ENCODE measurements at regions of chrX and their contacts with region 1.

Region 1: DNA sequence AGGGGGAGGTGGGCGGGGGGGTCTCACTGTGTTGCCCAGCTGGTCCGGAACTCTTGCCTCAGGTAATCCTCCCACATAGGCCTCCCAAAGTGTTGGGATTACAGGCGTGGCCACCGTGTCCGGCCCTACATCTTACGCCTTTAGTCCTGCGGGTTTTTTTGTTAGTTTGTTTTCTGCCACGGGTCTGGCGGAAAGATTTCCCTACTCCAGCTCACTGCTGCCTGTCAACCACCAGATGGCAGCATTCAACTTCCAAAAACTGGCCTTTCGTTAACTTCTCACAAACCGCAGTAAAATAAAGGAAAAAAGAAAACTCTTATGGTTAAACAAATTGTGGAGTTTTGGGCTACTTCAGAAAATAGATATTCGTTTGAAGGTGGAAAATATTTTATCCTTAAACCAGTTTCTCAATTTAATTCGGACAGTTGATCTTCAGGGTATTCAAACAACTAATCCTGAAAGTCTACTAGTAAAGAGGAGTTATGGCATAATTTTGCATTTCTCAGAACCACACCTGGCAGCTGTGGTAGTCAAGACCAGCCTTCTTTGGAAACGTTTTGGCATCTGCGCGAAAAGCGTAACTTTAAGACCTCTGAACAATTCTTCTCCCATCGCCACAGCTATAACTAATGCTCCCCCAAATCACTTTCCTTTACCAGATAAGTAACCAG is 41.1 kb downstream of the LUZP4 start:
- DNase-seq: peak; percentile 45
- H3K4me3 ChIP-seq: no peak overlapping the region
- H3K27ac ChIP-seq: no peak overlapping the region
- H3K4me1 ChIP-seq: no peaks in the 10 kb centered on the region
- H3K27me3 ChIP-seq: no peaks in the 10 kb centered on the region
- CTCF ChIP-seq: peak; percentile 73 to 84

Region 2: GRCh38 chrX:115642895-115643530 is 312.4 kb after region 1 on chrX:
- CTCF ChIA-PET with region 1: no interaction called
- dilution Hi-C with region 1: no loop called
- in situ Hi-C with region 1: no loop called
- intact Hi-C with region 1: loop called (anchors 2 kb)
- DNase-seq: peak; percentile 32
- H3K4me3 ChIP-seq: no peak overlapping the region
- H3K27ac ChIP-seq: peak overlapping the region; percentile 11
- H3K4me1 ChIP-seq: no peaks in the 10 kb centered on the region
- H3K27me3 ChIP-seq: no peaks in the 10 kb centered on the region
- CTCF ChIP-seq: peak; percentile 82 to 97

Region 3: DNA sequence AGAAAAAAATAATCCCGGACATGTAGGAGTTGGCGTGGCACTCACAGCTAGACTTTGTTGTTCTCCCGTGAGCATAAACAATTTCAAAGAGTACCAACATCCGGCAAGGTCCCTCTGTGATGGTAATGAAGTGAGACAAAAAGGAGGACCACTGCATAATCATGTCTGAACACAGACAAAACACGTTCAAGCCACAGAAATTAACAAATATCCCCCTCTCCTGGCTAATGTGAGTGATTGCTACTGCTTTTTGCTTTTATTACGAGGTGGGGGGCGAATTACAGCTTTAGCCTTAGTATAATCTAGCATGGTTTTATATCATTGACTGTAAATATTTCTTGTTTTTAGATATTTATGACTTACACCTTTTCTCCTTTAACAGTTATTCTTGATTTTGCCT is 348.8 kb after region 1 on chrX:
- CTCF ChIA-PET with region 1: no interaction called
- dilution Hi-C with region 1: no loop called
- in situ Hi-C with region 1: no loop called
- intact Hi-C with region 1: loop called (anchors 1 kb)
- DNase-seq: peak; percentile 6
- H3K4me3 ChIP-seq: no peak overlapping the region
- H3K27ac ChIP-seq: no peak overlapping the region
- H3K4me1 ChIP-seq: no peaks in the 10 kb centered on the region
- H3K27me3 ChIP-seq: peaks cover 4% of the 10 kb centered on the region
- CTCF ChIP-seq: peak; percentile 46 to 51

Region 4: DNA sequence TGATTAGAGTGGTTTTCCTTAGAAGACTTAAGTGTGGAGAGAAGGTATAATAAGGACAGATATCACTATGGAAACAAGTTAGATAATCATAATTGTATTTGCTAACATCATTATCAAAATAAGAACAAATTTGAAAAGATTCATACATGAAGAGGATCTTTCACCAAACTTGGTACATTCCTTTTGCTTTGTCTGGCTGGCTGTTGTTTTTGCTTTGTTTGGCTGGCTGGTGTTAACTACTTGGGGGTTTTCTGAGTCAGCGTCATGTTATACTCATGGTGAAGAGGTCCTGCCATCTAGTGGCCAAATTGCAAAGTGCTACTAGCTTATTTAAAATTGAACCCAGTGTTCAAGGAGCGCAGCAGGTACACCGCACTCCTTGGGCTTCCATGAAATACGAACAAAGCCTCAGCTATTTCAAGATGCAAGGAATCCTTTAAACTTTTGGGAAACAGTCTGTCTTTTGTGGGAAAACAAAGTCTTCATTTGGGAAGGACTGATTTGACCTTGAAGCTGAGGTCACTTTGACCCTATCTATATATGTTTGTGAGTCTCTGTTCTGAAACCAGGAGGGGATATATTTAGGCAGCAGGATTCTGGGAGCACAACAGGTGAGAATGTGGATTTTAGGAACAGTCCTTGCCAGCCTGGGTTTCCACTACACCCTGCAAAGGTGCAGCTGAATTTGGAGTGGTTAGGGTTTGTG is 360.0 kb after region 1 on chrX:
- CTCF ChIA-PET with region 1: interaction called, 3 read pairs
- dilution Hi-C with region 1: no loop called
- in situ Hi-C with region 1: no loop called
- intact Hi-C with region 1: loop called (anchors 1 kb)
- DNase-seq: peak; percentile 64
- H3K4me3 ChIP-seq: no peak overlapping the region
- H3K27ac ChIP-seq: no peak overlapping the region
- H3K4me1 ChIP-seq: no peaks in the 10 kb centered on the region
- H3K27me3 ChIP-seq: peaks cover 2% of the 10 kb centered on the region
- CTCF ChIP-seq: peak; percentile 83 to 85

Measured in mammary epithelial cell (primary cell).